Ascending aorta (tissue), 2 donors: ENCODE measurements at regions of chr4 and their contacts with region 1.

Region 1: DNA sequence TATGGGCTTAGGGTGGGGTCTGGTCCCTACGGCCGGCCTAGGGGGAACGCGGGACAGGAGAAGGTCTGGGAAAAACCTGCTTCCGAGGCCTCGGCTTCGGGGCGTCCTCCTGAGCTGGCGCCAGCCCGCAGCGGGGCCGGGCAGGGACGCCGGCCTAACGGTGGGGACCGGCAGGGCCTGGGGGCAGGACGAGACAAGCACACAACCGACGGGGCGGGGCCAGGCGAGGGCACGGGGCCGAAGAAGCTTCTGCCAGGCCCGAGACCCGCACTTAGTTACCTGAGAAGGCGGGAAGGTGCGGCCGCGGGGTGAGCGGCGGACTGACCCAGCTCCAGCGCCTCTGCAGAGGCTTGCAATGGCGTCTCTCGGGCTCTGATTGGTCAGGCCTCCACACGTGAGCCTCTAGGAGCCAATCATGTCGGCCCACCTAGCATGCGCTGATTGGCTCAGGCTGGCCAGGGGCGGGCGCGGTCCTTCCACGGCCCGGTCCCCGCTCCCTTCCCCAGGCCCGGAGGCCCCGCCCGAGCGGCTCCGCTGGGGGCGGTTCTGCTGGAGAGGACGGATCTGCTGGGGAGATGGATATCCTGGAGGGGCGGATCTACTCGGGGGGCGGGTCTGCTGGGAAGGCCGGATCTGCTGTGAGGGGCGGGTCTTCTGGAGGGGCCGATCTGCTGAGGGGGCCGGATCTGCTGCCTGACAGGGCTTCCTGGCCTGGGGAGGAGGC is 44.3 kb downstream of the CPLX1 start:
- DNase-seq: peak; percentile 99
- H3K4me3 ChIP-seq: peak overlapping the region; percentile 87 to 97
- H3K27ac ChIP-seq: peak overlapping the region; percentile 92 to 94
- H3K4me1 ChIP-seq: peaks cover 8 to 31% of the 10 kb centered on the region in 2 donors
- H3K27me3 ChIP-seq: peaks cover 14% of the 10 kb centered on the region
- CTCF ChIP-seq: no peak

Region 2: DNA sequence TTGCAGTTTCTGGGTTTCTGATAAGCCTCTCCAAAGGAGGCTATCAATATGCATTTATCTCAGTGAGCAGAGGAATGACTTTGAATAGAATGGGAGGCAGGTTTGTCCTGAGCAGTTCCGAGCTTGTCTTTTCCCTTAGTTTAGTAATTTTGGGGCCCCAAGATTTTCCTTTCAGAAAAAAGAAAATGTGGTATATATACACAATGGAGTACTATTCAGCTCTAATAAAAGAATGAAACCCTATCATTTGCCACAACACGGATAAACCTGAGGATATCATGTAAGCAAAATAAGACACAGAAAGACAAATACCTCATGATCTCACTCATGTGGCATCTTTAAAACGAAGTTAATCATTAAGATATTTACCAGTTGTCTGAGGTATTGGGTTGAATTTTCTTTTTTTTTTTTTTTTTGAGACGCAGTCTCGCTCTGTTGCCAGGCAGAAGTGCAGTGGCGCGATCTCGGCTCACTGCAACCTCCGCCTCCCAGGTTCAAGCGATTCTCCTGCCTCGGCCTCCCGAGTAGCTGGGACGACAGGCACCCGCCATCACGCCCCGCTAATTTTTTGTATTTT is 283.2 kb before region 1 on chr4:
- intact Hi-C with region 1: loop called (anchors 5 kb)
- DNase-seq: no peak
- H3K4me3 ChIP-seq: peak overlapping the region; percentile 72 to 87
- H3K27ac ChIP-seq: peak overlapping the region; percentile 62 to 92
- H3K4me1 ChIP-seq: peaks cover 6 to 9% of the 10 kb centered on the region in 2 donors
- H3K27me3 ChIP-seq: no peaks in the 10 kb centered on the region
- CTCF ChIP-seq: no peak

Region 3: DNA sequence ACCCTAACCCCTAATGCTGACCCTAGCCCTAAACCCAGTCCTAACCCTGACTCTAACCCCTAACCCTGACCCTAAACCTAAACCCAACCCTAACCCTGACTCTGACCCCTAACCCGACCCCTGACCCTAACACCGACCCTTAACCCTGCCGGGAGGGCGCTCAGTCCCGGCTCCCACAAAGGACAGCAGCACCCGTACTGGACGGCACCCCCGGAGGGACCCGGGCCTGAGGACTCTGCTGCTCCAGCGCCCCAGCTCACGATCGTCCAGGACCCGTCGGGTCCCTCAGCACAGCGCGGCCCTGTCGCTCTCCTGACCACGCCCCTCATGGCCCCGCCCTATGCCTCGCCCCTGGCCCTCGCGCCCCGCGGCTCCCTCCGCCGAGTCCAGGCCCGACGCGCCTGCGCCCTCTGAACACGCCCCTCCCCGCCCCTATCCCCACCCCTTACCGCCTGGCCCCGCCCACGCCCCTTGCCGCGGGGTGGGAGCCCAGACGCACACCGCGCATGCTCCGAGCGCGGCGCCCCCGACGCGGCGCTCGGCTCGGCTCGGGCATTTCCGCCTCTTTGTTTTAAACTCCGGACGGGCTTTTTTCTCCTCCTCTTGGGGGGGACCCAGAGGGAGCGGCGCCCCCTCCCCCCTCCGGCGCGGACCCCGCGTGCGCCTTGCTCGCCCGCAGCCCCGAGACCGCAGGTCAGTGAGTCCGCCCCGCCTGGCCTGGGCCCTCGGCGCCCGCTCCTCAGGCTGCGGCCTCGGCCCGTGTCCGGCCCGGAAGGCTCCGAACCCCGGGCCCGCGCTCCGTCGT is 76.2 kb before region 1 on chr4 and contains the start of gene PCGF3:
- intact Hi-C with region 1: loop called (anchors 1 kb)
- DNase-seq: peak; percentile 81 to 98
- H3K4me3 ChIP-seq: peak within 1 kb of the TSS; percentile 75 to 100
- H3K27ac ChIP-seq: peak within 1 kb of the TSS; percentile 79 to 92
- H3K4me1 ChIP-seq: peaks cover 6 to 13% of the 10 kb centered on the region in 2 donors
- H3K27me3 ChIP-seq: no peaks in the 10 kb centered on the region
- CTCF ChIP-seq: no peak
- total RNA-seq, gene PCGF3: 124 TPM

Region 4: DNA sequence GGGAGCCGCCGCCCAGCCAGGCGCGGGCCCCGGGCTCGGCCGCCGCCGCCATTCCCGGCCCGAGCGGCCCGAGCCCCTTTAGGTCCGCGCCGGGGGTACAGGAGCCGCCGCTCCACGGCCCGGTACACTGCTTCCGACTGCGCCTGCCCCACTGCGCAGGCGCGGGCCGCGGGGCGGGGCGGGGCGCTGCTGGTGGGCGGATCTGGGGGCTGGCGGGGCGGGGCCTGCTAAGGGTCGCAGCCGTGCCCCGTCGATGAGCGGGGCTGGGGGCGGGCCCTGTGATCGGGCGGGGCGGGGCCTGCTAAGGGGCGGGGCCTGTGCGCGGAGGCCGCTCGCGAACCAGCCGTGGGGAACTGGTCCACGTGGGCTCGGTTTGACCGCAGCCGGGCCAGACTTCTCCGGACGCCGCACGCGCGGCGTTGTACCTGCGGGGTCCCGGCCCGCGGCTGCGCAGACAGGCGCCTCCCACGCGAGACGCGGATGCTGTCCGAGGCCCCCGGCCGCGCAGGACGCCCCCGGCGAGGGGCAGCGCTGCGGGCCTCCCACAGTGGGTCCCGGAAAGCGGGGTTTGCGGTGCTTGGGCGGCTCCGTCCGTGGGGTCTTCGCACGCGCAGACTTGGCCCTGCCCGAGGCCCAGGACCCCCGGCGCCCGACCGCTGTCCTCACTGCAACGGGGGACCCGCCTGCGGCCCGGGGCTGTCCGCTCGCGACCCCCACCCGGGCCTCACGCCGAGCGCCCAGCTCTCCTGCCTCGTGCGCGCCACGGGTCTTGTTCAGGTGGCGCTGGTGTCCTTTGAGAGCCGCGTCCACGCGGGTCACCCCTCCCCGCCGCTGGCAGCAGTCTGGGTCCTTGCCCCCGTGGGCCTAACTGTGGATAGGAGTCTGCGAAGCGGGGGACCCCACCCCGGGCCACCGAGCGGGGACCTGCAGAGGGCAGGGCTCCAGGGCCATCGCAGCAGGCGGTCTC is 192.1 kb after region 1 on chr4 and contains the start of gene DGKQ:
- intact Hi-C with region 1: loop called (anchors 1 kb)
- DNase-seq: peak; percentile 45 to 92
- H3K4me3 ChIP-seq: peak within 1 kb of the TSS; percentile 84 to 92
- H3K27ac ChIP-seq: no peak within 1 kb of the TSS
- H3K4me1 ChIP-seq: peaks cover 9 to 16% of the 10 kb centered on the region in 2 donors
- H3K27me3 ChIP-seq: no peaks in the 10 kb centered on the region
- CTCF ChIP-seq: no peak
- total RNA-seq, gene DGKQ: 20.1 TPM

Region 5: DNA sequence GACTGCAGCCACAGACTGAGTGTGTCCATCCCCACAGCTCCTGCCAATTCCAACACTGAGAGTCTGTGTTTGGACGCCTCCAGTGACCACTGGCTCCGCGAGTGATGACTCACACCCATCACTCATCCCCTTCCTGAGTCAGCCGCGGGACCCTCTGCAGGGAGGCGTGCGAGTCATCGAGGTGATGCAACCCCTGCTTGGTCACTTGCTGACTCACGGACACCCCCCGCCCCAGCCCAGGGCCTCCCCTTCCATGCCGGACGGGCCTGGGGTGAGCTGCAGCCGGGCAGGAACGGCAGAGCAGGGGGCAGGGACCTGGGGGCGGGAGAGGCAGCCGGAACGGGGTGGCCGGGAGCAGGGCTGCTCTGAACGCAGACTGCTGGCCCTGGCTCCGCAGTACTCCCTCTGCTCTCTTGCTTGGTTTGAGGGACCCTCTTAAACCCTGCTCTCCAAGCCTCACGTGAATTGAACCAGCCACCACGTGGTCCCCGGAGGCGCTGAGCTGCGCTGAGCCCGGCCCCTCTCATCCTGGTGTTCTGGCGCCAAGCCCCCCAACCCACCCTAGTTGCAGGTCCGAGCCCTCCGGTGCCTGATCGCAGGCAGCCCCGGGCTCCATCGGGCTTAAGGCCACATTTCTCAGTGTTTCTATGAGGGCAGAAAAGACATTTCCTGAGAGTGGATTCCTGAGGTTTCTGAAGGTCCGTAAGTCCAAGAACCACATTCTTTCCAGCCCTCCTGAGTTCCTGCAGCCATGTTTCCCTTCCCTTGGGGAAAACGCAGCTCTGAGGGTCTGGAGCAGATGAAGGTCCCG is 262.2 kb after region 1 on chr4:
- intact Hi-C with region 1: loop called (anchors 2 kb)
- DNase-seq: peak; percentile 94 to 99
- H3K4me3 ChIP-seq: peak overlapping the region; percentile 35 to 56
- H3K27ac ChIP-seq: peak overlapping the region; percentile 80 to 95
- H3K4me1 ChIP-seq: peaks cover 38 to 73% of the 10 kb centered on the region in 2 donors
- H3K27me3 ChIP-seq: no peaks in the 10 kb centered on the region
- CTCF ChIP-seq: no peak